Activated CD8-positive, alpha-beta memory T cell treated with anti-CD3 and anti-CD28 coated beads, Interleukin-2, amount 10 ng/mL, durations not matched to agents 7 days and 5 days (primary cell): ENCODE measurements at regions of chr1 and their contacts with region 1.

Region 1: GRCh38 chr1:212595787-212596714 is 12.5 kb upstream of the ATF3 start:
- DNase-seq: peak; percentile 75
- ATAC-seq: peak; percentile 96
- H3K4me3 Mint-ChIP-seq: peak overlapping the region; percentile 69
- H3K27ac Mint-ChIP-seq: peak overlapping the region; percentile 99
- H3K4me1 Mint-ChIP-seq: peaks cover 30% of the 10 kb centered on the region
- H3K27me3 Mint-ChIP-seq: peaks cover 18% of the 10 kb centered on the region

Region 2: DNA sequence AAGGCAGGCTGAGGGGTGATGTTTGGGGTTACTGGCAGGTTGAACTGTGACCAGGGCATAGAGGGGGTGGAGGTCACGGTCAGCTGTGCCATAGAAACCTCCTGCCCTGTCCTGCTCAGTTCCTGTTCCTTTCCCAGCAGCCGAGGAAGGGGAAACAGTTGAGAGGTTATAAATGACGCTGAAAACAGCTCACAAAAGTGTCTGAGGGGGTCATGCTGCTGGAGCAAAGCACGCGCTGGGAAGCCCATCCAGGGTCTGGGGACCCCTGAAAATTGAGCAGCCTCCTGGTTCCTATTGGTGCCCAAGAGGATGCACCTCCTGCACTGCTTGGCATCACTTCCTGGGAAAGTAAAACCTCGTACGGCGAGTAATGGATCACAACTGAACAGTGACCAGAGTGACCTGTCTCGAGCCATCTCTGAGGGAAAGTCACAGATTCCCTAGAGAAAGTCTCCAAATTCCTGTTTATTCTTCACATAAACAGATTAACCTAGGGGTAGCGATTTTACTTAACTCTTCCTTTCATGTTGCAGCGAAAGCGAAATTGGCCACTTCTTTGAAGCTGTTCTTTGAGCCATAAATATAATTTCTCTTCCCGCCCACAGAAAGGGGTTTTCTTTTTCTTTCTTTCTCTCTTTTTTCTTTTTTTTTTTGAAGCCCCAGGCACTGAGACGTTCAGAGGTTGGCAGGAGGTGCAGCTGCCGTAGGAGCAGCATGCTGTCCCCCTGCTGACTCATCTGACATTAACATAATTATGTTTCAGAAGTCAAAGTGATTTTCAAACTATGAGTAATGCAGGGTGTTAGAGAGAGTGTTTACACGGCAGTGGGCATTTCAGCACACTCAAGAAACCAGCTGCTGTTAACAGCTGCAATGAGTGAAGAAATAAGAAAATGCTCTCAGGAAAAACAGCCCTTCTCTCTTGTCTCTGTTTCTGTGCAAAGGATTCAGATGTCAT is 29.2 kb before region 1 on chr1:
- CTCF ChIA-PET with region 1: interaction called, 10 read pairs
- DNase-seq: peak; percentile 82
- ATAC-seq: peak; percentile 99
- H3K4me3 Mint-ChIP-seq: peak overlapping the region; percentile 83
- H3K27ac Mint-ChIP-seq: peak overlapping the region; percentile 94
- H3K4me1 Mint-ChIP-seq: peaks cover 27% of the 10 kb centered on the region
- H3K27me3 Mint-ChIP-seq: peaks cover 23% of the 10 kb centered on the region

Region 3: GRCh38 chr1:212608209-212608955 is 12.3 kb after region 1 on chr1 and contains the start of gene ATF3:
- CTCF ChIA-PET with region 1: interaction called, 34 read pairs
- DNase-seq: peak; percentile 98
- ATAC-seq: peak; percentile 78
- H3K4me3 Mint-ChIP-seq: peak within 1 kb of the TSS; percentile 90
- H3K27ac Mint-ChIP-seq: peak within 1 kb of the TSS; percentile 96
- H3K4me1 Mint-ChIP-seq: peaks cover 50% of the 10 kb centered on the region
- H3K27me3 Mint-ChIP-seq: peaks cover 37% of the 10 kb centered on the region
- total RNA-seq, gene ATF3: 21.3 to 36.5 TPM